Caco-2 (cell line): ENCODE measurements at regions of chr3 and their contacts with region 1.

Region 1: DNA sequence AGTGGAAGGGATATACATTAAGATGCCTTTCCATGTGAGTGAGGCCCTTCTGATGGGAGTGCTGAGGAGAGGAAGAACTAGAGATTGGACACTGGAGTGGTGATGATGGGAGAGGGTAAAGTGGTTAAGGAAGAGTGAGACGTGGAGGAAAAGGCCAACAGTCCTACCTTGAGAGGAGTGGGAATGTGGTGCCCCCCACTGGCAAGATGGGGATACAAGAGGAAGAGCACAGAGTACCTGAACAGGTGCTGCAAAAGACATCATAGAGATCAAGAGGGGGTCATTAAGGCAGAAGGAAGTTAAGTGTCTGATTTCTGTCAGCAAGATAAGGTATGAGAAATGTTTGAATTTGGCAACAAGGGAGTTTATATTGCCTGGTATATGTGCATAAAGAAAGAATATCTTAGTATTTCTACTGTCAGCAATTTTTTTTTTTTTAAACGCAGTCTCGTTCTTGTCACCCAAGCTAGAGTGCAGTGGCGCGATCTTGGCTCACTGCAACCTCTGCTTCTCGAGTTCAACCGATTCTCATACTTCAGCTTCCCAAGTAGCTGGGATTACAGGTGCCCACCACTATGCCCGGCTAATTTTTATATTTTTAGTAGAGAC is 34.0 kb downstream of the ARIH2 start:
- DNase-seq: peak; percentile 41 to 63
- H3K4me3 ChIP-seq: no peak overlapping the region
- H3K4me3 Mint-ChIP-seq: no peak overlapping the region
- H3K27ac Mint-ChIP-seq: no peak overlapping the region
- H3K4me1 ChIP-seq: no peaks in the 10 kb centered on the region
- H3K4me1 Mint-ChIP-seq: peaks cover 7% of the 10 kb centered on the region
- H3K27me3 ChIP-seq: no peaks in the 10 kb centered on the region
- H3K27me3 Mint-ChIP-seq: no peaks in the 10 kb centered on the region
- CTCF ChIP-seq: peak; percentile 40 to 66

Region 2: GRCh38 chr3:48685602-48686511 is 266.8 kb before region 1 on chr3 and contains the start of gene NCKIPSD:
- CTCF ChIA-PET with region 1: no interaction called
- POLR2A ChIA-PET with region 1: no interaction called
- intact Hi-C with region 1: loop called (anchors 10 kb)
- DNase-seq: peak; percentile 83 to 90
- H3K4me3 ChIP-seq: peak within 1 kb of the TSS; percentile 55
- H3K4me3 Mint-ChIP-seq: peak within 1 kb of the TSS; percentile 86
- H3K27ac Mint-ChIP-seq: peak within 1 kb of the TSS; percentile 84
- H3K4me1 ChIP-seq: peaks cover 7% of the 10 kb centered on the region
- H3K4me1 Mint-ChIP-seq: peaks cover 14% of the 10 kb centered on the region
- H3K27me3 ChIP-seq: no peaks in the 10 kb centered on the region
- H3K27me3 Mint-ChIP-seq: no peaks in the 10 kb centered on the region
- CTCF ChIP-seq: peak; percentile 58 to 88
- total RNA-seq, gene NCKIPSD: 30.1 and 30.2 TPM in 2 replicates

Region 3: DNA sequence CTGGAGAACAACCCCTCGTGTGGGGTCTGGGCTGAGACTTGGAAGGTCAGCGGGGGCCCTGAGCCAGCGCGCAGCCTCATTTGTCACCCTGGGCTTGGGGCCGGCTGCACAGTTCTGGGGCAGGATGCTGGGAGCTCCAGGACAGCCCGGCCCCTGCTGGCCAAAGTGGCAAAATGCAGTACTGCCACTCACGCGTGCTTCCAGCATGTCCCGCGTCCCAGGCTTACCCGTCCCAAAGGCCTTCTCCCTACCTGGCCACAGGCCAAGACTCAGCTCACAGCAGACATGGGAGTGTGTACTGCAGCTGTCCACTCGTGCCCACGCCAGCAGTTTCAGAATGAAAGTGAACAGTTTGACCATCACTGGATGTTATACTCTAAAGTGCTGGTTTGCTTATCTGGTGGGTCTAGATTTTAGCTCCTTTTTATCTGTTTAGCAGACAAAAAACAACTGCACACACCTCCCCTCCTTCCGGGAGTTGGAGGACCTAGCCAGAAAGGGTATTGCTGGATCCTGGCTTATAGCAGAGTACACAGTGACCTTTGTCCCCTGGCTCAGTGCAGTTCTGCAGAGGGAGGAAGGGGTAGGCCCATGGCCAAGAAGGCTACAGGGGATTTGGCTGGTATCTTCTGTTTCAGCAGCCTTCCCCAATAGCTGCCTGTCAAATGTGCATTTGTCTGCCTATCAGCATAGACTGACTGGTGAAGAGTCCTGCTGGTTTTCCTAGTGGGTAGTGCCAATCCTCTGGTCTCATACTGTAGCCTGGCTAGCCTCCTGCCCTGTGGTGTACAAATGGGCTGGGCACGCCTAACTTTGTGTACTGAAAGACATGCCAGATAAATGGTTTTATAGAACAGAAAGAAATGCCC is 212.4 kb before region 1 on chr3:
- CTCF ChIA-PET with region 1: no interaction called
- POLR2A ChIA-PET with region 1: no interaction called
- intact Hi-C with region 1: loop called (anchors 1 kb)
- DNase-seq: peak; percentile 66 to 73
- H3K4me3 ChIP-seq: no peak overlapping the region
- H3K4me3 Mint-ChIP-seq: no peak overlapping the region
- H3K27ac Mint-ChIP-seq: peak overlapping the region; percentile 49
- H3K4me1 ChIP-seq: peaks cover 26% of the 10 kb centered on the region
- H3K4me1 Mint-ChIP-seq: peaks cover 6% of the 10 kb centered on the region
- H3K27me3 ChIP-seq: no peaks in the 10 kb centered on the region
- H3K27me3 Mint-ChIP-seq: no peaks in the 10 kb centered on the region
- CTCF ChIP-seq: peak; percentile 61 to 64

Region 4: GRCh38 chr3:49104483-49105291 is 152.1 kb after region 1 on chr3 and contains the start of gene QARS1:
- CTCF ChIA-PET with region 1: no interaction called
- POLR2A ChIA-PET with region 1: no interaction called
- intact Hi-C with region 1: no loop called
- DNase-seq: peak; percentile 95 to 96
- H3K4me3 ChIP-seq: peak within 1 kb of the TSS; percentile 80
- H3K4me3 Mint-ChIP-seq: peak within 1 kb of the TSS; percentile 96
- H3K27ac Mint-ChIP-seq: peak within 1 kb of the TSS; percentile 98
- H3K4me1 ChIP-seq: no peaks in the 10 kb centered on the region; the same call in 1 of the 2 replicates
- H3K4me1 Mint-ChIP-seq: peaks cover 7% of the 10 kb centered on the region
- H3K27me3 ChIP-seq: no peaks in the 10 kb centered on the region
- H3K27me3 Mint-ChIP-seq: no peaks in the 10 kb centered on the region
- CTCF ChIP-seq: no peak
- total RNA-seq, gene QARS1: 361 and 386 TPM in 2 replicates